Transverse colon (tissue), 4 donors: ENCODE measurements at regions of chr14 and their contacts with region 1.

Region 1: GRCh38 chr14:56339855-56340701 is 221.9 kb downstream of the PELI2 start:
- DNase-seq: peak; percentile 72
- H3K4me3 ChIP-seq: no peak overlapping the region
- H3K27ac ChIP-seq: no peak overlapping the region
- H3K4me1 ChIP-seq: peaks cover 0 to 17% (median 9%) of the 10 kb centered on the region in 4 donors
- H3K27me3 ChIP-seq: no peaks in the 10 kb centered on the region
- CTCF ChIP-seq: peak; percentile 69 to 80 (median 76)
- EP300 ChIP-seq: no peak
- POLR2A ChIP-seq: no peak

Region 2: GRCh38 chr14:55707365-55707804 is 632.7 kb before region 1 on chr14:
- in situ Hi-C with region 1: loop called in 3 of 4 experiments (anchors 10 to 25 kb)
- intact Hi-C with region 1: loop called (anchors 10 kb)
- DNase-seq: no peak
- H3K4me3 ChIP-seq: no peak overlapping the region
- H3K27ac ChIP-seq: no peak overlapping the region
- H3K4me1 ChIP-seq: peaks cover 0 to 10% (median 2%) of the 10 kb centered on the region in 4 donors
- H3K27me3 ChIP-seq: no peaks in the 10 kb centered on the region
- CTCF ChIP-seq: peak; percentile 55 to 77 (median 64)
- EP300 ChIP-seq: no peak
- POLR2A ChIP-seq: no peak

Region 3: GRCh38 chr14:55715889-55716288 is 624.2 kb before region 1 on chr14:
- in situ Hi-C with region 1: loop called in 2 of 4 experiments (anchors 25 kb)
- intact Hi-C with region 1: loop called (anchors 10 kb)
- DNase-seq: no peak
- H3K4me3 ChIP-seq: no peak overlapping the region
- H3K27ac ChIP-seq: peak overlapping the region in 1 of 4 donors; percentile 12
- H3K4me1 ChIP-seq: no peaks in the 10 kb centered on the region
- H3K27me3 ChIP-seq: no peaks in the 10 kb centered on the region
- CTCF ChIP-seq: no peak
- EP300 ChIP-seq: no peak
- POLR2A ChIP-seq: no peak

Region 4: DNA sequence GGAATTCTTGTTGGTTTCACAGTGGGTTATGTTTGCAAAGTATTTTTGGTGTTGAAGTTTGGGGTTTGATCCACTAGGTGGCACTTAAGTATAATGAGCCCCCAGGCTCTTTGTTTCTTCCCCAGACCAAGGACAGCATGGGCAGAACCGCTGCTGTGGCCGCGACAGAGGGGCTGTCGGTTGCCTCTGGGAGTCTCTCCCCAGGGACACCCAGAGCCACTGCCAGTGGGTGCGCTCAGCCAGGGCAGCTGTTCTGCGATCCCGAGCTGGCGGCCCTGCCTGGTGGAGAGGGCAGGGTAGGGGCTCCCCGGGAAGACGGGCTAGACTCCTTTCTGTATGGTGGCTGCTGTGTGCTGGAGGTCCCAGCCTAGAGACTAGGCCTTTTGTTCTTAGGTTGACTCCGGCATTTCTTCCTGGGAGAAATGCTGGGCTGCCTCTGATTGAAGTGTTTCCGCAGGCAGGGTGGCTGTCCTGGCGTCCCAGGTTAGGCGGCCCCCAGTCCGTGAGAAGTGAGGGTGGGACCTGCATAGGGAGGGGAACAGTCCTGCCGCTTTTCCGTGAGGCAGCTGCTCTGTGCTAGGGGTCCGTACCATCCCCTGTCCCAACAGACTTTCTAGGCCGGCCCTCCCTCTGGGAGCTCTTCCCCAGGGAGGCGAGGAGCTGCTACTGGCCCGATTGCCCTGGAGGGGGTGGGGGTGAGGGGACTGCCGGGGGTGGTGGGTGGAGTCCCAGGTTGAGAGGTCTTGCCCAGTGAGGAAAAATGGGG is 475.0 kb before region 1 on chr14:
- in situ Hi-C with region 1: loop called in 1 of 4 experiments (anchors 25 kb)
- intact Hi-C with region 1: no loop called
- DNase-seq: no peak
- H3K4me3 ChIP-seq: no peak overlapping the region
- H3K27ac ChIP-seq: no peak overlapping the region
- H3K4me1 ChIP-seq: peaks cover 0 to 13% (median 0%) of the 10 kb centered on the region in 4 donors
- H3K27me3 ChIP-seq: no peaks in the 10 kb centered on the region
- CTCF ChIP-seq: peak in 1 of 5 experiments; percentile 18
- EP300 ChIP-seq: no peak
- POLR2A ChIP-seq: no peak

Region 5: DNA sequence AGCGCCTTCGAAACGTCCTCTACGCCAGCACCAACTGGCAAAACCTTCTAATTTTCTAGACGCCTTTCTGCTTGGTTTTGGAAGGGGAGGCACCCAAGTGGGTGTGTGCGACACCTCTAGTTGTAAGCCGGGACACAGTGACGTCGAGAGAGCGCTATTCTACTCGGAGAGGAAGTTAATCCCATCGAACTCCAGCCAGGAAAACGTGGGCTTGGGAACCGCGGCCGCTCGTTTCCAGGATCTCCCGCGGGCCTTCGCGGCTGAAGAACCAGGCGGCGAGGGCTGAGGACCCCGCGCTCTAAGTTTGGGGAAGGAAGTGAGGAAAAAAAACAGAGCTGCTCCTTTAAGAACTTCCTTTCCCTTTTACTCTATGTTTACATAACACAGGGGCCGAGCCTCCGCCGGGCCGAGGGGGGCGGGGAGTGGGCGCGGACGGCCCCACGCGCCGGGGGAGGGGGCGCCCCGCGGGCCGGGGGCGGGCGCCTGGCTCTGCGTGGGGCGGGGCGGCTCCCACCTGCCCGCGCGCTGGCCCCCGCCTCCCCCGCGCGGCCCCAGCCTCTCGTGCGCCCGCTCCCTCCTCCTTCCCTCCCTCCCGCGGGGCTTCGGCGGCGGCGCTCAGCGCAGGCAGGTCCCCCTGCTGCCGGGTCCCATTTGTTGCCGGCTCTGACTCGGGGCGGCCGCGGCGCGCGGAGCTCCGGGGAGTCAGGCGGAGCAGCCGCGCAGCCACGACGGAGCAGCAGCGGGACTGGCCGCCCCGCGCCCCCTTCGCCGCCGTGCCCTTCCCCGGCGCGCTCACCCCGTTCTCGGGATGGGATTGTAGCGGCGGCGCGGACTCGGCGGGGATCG is 222.1 kb before region 1 on chr14 and contains the start of gene PELI2:
- in situ Hi-C with region 1: loop called in 1 of 4 experiments (anchors 25 kb)
- intact Hi-C with region 1: no loop called
- DNase-seq: peak; percentile 81
- H3K4me3 ChIP-seq: peak within 1 kb of the TSS; percentile 59 to 96 (median 71)
- H3K27ac ChIP-seq: peak within 1 kb of the TSS; percentile 91 to 94 (median 93)
- H3K4me1 ChIP-seq: peaks cover 10 to 36% (median 18%) of the 10 kb centered on the region in 4 donors
- H3K27me3 ChIP-seq: no peaks in the 10 kb centered on the region
- CTCF ChIP-seq: peak in 3 of 5 experiments; percentile 13 to 24 (median 15)
- EP300 ChIP-seq: no peak
- POLR2A ChIP-seq: peak; percentile 48
- total RNA-seq, gene PELI2: 4.8 to 29.9 (median 14.7) TPM